ENCODE measurements at regions of chr11 and their contacts with region 1.

Region 1: GRCh38 chr11:118610804-118611795 is 3.7 kb downstream of the PHLDB1 start:
- DNase-seq: peak; percentile 58
- H3K4me3 Mint-ChIP-seq: no peak overlapping the region
- H3K27ac Mint-ChIP-seq: no peak overlapping the region
- H3K4me1 Mint-ChIP-seq: peaks cover 20% of the 10 kb centered on the region
- H3K27me3 Mint-ChIP-seq: no peaks in the 10 kb centered on the region
- CTCF ChIP-seq: peak; percentile 84

Region 2: DNA sequence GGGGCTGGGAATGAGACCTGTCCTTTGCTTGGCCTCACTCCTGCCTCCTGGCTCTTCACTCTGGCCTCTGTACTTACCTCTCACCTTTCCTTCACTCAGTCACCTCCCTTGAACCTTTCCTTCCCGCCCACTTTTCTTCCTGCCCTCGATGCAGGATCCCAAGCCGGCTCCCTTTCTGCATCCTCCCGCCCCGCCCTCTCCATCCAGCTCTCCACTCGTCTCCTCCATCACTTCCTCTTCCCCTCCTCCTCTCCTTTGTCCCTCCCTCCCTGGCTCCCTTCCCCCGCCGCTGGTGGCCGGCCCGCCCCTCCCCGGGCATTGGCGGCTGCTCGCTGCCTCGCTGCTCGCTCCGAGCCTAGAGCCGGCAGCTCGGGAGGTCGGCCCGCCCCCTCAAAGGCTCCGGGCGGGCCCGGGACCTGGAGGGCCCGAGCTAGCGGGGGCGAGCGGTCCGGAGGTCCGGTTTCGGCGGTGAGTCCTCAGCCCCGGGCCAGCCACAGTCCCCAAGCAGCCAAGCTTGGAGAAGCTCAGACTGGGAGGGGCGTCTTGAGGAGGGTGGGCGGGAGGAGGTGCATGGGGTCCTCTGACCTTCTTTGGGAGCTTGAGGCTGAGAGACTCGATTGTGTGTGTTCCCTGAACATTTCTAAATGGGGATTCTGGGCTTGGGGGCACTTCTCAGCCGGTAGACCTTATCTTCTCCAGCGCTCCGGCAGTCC is 10.1 kb after region 1 on chr11:
- CTCF ChIA-PET with region 1: interaction called, 17 read pairs
- POLR2A ChIA-PET with region 1: interaction called, 113 read pairs
- intact Hi-C with region 1: loop called (anchors 2 kb)
- DNase-seq: peak; percentile 89
- H3K4me3 Mint-ChIP-seq: peak overlapping the region; percentile 71
- H3K27ac Mint-ChIP-seq: peak overlapping the region; percentile 38
- H3K4me1 Mint-ChIP-seq: peaks cover 73% of the 10 kb centered on the region
- H3K27me3 Mint-ChIP-seq: no peaks in the 10 kb centered on the region
- CTCF ChIP-seq: no peak

Region 3: DNA sequence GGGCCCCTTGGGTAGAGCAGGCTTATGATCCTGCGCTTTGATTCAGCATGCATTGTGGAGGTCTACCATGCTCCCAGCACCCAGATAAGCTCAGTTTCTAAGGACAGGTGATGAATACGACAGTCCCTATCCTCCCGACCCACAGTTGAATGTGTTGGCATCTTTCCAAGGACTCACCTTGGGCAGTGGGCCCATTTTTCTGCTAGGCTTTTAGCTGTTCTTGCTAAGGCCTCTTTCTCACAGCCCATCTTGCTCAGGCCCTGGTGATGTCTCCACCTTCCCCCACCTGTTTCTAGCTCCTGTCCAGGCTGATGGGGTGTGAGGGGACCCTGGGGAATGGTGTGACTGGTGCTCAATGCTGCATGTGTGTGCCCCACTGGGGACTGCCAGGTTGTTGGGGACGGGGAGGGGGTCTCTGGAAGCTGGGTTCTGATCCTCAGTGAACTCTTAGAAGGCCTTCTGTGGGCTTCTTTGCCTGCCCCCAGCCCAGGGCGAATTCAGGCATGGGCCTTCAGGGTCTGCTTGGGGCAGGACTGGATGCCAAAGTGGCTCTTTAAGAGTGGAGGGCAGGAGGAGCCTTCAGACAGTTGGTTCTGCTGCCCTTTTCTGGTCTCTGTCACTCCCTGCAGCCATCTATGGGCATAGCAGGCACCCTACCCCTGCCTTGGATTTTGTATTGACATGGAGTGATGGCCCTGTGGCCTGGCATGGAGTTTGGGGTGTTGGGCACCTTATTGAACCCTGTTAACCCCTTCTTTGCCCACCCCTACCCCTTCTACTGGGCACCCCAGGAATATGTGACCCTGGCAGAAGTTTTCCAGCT is 29.4 kb after region 1 on chr11:
- CTCF ChIA-PET with region 1: interaction called, 21 read pairs
- POLR2A ChIA-PET with region 1: interaction called, 7 read pairs
- intact Hi-C with region 1: loop called (anchors 1 kb)
- DNase-seq: peak; percentile 54
- H3K4me3 Mint-ChIP-seq: no peak overlapping the region
- H3K27ac Mint-ChIP-seq: no peak overlapping the region
- H3K4me1 Mint-ChIP-seq: peaks cover 9% of the 10 kb centered on the region
- H3K27me3 Mint-ChIP-seq: no peaks in the 10 kb centered on the region
- CTCF ChIP-seq: peak; percentile 50

Region 4: DNA sequence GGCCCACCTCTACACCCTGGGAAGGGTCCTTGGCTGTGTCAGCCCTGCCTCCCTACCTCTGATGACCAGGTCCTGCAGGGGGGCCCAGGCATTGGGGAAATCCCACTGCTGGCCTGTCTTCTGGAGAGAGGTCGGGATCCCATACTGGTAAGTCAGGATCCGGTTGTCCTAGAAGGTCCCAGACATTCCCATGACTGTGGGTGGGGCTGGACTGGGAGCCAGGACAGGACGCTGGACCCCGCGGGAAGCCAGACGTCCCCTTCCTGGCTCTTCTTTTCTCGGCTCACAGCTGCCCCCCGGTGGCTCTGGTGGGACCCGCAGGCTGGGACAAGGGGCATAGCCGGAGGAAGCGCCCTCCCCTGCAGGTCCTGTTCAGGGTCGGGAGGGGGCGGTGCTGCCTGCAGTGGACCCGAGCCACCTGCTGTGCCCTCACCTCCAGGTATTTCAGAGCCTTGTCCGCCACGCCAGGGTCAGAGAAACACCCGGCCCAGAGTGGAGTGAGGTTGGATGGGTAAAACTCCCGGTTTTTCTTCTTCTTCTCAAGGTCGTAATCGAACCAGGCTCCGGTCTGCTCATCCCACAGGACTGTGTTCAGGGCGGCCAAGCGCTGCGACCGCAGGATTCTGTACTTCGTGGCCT is 48.3 kb after region 1 on chr11:
- CTCF ChIA-PET with region 1: interaction called, 5 read pairs
- POLR2A ChIA-PET with region 1: interaction called, 19 read pairs
- intact Hi-C with region 1: loop called (anchors 1 kb)
- DNase-seq: peak; percentile 84
- H3K4me3 Mint-ChIP-seq: no peak overlapping the region
- H3K27ac Mint-ChIP-seq: no peak overlapping the region
- H3K4me1 Mint-ChIP-seq: no peaks in the 10 kb centered on the region
- H3K27me3 Mint-ChIP-seq: no peaks in the 10 kb centered on the region
- CTCF ChIP-seq: peak; percentile 96

Region 5: DNA sequence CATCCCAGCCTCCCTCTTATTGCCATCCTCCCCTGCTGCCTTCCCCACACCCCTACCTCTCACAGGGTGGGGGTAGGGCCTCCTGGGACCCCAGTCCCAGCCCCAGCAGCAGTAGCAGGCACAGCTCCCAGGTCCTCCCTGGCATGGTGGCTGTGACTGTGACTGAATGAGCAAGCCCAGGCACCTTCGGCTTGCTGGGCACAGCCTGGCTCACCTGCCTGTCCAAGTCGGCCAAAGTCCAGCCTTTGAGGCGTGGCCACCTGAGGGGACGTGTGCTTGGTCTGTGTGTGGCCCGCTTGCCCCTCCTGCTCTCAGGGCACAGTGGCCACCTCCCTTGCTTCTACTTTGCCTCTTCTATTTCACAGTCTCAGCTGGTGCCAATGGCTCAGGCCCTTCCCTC is 68.4 kb after region 1 on chr11 and contains the start of gene TREH:
- CTCF ChIA-PET with region 1: no interaction called
- POLR2A ChIA-PET with region 1: no interaction called
- intact Hi-C with region 1: no loop called
- DNase-seq: no peak
- H3K4me3 Mint-ChIP-seq: no peak within 1 kb of the TSS
- H3K27ac Mint-ChIP-seq: no peak within 1 kb of the TSS
- H3K4me1 Mint-ChIP-seq: peaks cover 7% of the 10 kb centered on the region
- H3K27me3 Mint-ChIP-seq: no peaks in the 10 kb centered on the region
- CTCF ChIP-seq: no peak
- total RNA-seq, gene TREH: not detected in 2 replicates